ENCODE measurements at regions of chr13 and their contacts with region 1.

Region 1: GRCh38 chr13:99269627-99270241 is 11.6 kb upstream of the GPR18 start:
- DNase-seq: peak; percentile 81
- ATAC-seq: peak; percentile 76
- H3K4me3 ChIP-seq: no peak overlapping the region
- H3K4me3 Mint-ChIP-seq: no peak overlapping the region
- H3K27ac ChIP-seq: peak overlapping the region; percentile 69 to 89
- H3K27ac Mint-ChIP-seq: peak overlapping the region; percentile 50
- H3K4me1 ChIP-seq: peaks cover 45 to 55% of the 10 kb centered on the region in 2 donors
- H3K4me1 Mint-ChIP-seq: peaks cover 59% of the 10 kb centered on the region
- H3K27me3 ChIP-seq: no peaks in the 10 kb centered on the region
- H3K27me3 Mint-ChIP-seq: no peaks in the 10 kb centered on the region
- CTCF ChIP-seq: peak; percentile 92

Region 2: GRCh38 chr13:99200432-99201167 is 69.1 kb before region 1 on chr13 and contains the start of gene UBAC2:
- CTCF ChIA-PET with region 1: interaction called, 349 read pairs
- POLR2A ChIA-PET with region 1: interaction called, 11 read pairs
- intact Hi-C with region 1: loop called (anchors 1 kb)
- DNase-seq: peak; percentile 98
- ATAC-seq: peak; percentile 73
- H3K4me3 ChIP-seq: peak within 1 kb of the TSS; percentile 71 to 97 (median 92)
- H3K4me3 Mint-ChIP-seq: peak within 1 kb of the TSS; percentile 97
- H3K27ac ChIP-seq: peak within 1 kb of the TSS; percentile 97
- H3K27ac Mint-ChIP-seq: peak within 1 kb of the TSS; percentile 94
- H3K4me1 ChIP-seq: peaks cover 38 to 46% of the 10 kb centered on the region in 2 donors
- H3K4me1 Mint-ChIP-seq: peaks cover 54% of the 10 kb centered on the region
- H3K27me3 ChIP-seq: no peaks in the 10 kb centered on the region
- H3K27me3 Mint-ChIP-seq: no peaks in the 10 kb centered on the region
- CTCF ChIP-seq: no peak
- total RNA-seq, gene UBAC2: 52.9 and 56.3 TPM in 2 replicates

Region 3: DNA sequence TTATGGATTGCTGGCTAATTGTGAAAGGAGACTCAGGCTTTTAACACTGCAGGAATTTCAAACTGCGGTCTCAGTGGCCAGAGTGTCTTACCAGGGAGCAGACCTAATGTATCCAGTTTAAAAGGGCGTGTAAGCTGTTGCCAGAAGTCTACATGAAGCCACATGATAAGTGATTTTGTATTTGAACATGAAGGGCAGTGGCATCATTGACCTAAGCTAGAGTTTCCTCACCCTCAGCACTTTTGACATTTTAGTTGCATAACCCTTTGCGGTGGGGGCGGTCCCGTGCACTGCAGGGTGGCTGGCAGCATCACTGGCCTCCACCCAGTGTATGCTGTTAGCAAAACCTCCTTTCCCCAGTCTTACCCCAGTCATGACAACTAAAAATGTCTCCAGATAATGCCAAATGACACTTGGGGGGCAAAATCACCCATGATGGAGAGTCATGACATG is 12.1 kb after region 1 on chr13:
- CTCF ChIA-PET with region 1: interaction called, 164 read pairs
- POLR2A ChIA-PET with region 1: interaction called, 3 read pairs
- intact Hi-C with region 1: loop called (anchors 1 kb)
- DNase-seq: no peak
- ATAC-seq: peak; percentile 82
- H3K4me3 ChIP-seq: peak overlapping the region in 3 of 5 experiments; percentile 15 to 32 (median 31)
- H3K4me3 Mint-ChIP-seq: peak overlapping the region; percentile 73
- H3K27ac ChIP-seq: peak overlapping the region; percentile 85 to 89
- H3K27ac Mint-ChIP-seq: peak overlapping the region; percentile 95
- H3K4me1 ChIP-seq: peaks cover 87 to 88% of the 10 kb centered on the region in 2 donors
- H3K4me1 Mint-ChIP-seq: peaks cover 87% of the 10 kb centered on the region
- H3K27me3 ChIP-seq: no peaks in the 10 kb centered on the region
- H3K27me3 Mint-ChIP-seq: no peaks in the 10 kb centered on the region
- CTCF ChIP-seq: no peak

Region 4: GRCh38 chr13:99331881-99332293 is 62.2 kb after region 1 on chr13:
- CTCF ChIA-PET with region 1: interaction called, 23 read pairs
- POLR2A ChIA-PET with region 1: no interaction called
- intact Hi-C with region 1: no loop called
- DNase-seq: no peak
- ATAC-seq: no peak
- H3K4me3 ChIP-seq: no peak overlapping the region
- H3K4me3 Mint-ChIP-seq: no peak overlapping the region
- H3K27ac ChIP-seq: no peak overlapping the region
- H3K27ac Mint-ChIP-seq: no peak overlapping the region
- H3K4me1 ChIP-seq: peaks cover 13 to 24% of the 10 kb centered on the region in 2 donors
- H3K4me1 Mint-ChIP-seq: peaks cover 44% of the 10 kb centered on the region
- H3K27me3 ChIP-seq: no peaks in the 10 kb centered on the region
- H3K27me3 Mint-ChIP-seq: no peaks in the 10 kb centered on the region
- CTCF ChIP-seq: no peak

Region 5: DNA sequence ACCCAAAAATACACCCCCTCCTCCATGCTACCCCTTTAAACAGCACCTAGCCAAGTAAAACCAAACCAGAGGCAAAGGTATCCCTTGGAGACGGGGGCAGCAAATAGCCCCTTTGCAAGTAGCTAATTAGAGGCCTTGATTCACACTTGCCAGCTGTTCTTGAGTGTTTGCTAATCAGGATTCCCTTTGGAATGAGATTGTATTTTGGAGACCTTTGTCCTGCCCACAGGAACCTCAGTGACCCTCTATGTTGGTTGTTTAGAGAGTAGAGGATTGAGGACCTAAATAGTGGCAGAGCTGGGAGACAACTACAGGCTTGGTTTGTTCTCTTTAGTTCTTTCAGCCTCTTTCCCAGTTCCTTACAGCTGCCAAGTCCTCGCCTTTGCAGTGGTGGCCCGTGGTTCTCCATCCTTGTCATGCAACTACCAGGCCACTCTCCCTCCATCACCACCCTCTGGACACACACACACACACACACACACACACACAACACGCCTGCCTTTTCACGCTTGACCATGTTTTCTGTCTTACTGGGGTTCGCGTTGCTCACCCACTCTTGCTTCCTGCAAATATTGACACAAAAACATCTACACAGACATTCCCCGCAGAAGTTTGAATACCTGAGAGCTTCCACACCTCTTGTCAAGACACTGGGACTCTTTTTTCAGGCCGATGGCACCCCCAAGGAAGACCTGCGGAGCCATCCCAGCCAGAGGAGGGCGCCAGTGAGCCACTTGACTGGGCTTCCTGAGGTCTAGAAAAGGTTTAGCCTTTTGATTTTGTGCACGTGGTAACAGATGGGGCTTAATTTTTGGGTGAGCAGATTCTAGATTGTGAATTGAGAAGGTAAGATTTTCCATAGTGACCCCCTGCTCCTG is 117.4 kb after region 1 on chr13:
- CTCF ChIA-PET with region 1: interaction called, 477 read pairs
- POLR2A ChIA-PET with region 1: interaction called, 5 read pairs
- intact Hi-C with region 1: loop called (anchors 1 kb)
- DNase-seq: peak; percentile 89
- ATAC-seq: peak; percentile 68
- H3K4me3 ChIP-seq: no peak overlapping the region
- H3K4me3 Mint-ChIP-seq: peak overlapping the region; percentile 58
- H3K27ac ChIP-seq: peak overlapping the region; percentile 8 to 69
- H3K27ac Mint-ChIP-seq: peak overlapping the region; percentile 91
- H3K4me1 ChIP-seq: peaks cover 35 to 44% of the 10 kb centered on the region in 2 donors
- H3K4me1 Mint-ChIP-seq: peaks cover 46% of the 10 kb centered on the region
- H3K27me3 ChIP-seq: no peaks in the 10 kb centered on the region
- H3K27me3 Mint-ChIP-seq: no peaks in the 10 kb centered on the region
- CTCF ChIP-seq: peak; percentile 88

Region 6: DNA sequence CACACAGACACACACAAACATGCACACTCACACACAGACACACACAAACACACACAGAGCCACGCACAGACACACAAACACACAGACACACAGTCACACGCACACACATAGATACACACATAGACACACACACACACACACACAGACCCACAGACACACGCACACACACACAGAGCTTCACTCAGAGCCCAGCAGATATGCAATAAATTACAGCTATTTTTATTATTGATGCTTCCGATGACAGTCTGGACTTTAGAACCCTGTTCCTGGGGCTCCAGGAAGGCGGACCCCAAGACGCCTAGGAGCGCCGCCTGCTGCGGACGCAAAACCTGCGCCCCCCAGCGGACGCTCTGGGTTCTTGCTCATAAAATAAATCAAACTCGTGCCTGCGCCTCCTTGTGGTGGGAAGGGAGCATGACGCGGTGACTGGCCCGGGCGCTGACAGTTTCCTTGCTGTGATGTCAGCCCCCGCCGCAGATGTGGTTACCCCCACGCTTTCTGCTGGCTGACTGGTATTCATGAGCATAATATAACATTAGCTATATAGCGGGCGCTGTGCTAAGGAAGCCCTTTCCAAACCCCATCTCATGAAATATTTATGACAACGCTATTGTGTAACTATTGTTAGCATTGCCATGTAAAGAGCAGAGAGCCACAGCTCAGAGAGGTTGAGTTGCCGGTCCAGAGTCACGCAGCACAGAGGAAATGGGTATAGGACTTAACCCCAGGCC is 167.1 kb after region 1 on chr13:
- CTCF ChIA-PET with region 1: interaction called, 545 read pairs
- POLR2A ChIA-PET with region 1: interaction called, 14 read pairs
- intact Hi-C with region 1: loop called (anchors 1 kb)
- DNase-seq: peak; percentile 96
- ATAC-seq: peak; percentile 69
- H3K4me3 ChIP-seq: peak overlapping the region in 2 of 5 experiments; percentile 6 to 27
- H3K4me3 Mint-ChIP-seq: peak overlapping the region; percentile 76
- H3K27ac ChIP-seq: no peak overlapping the region
- H3K27ac Mint-ChIP-seq: peak overlapping the region; percentile 81
- H3K4me1 ChIP-seq: peaks cover 49 to 70% of the 10 kb centered on the region in 2 donors
- H3K4me1 Mint-ChIP-seq: peaks cover 64% of the 10 kb centered on the region
- H3K27me3 ChIP-seq: no peaks in the 10 kb centered on the region
- H3K27me3 Mint-ChIP-seq: no peaks in the 10 kb centered on the region
- CTCF ChIP-seq: peak; percentile 100

Region 7: GRCh38 chr13:100382785-100383184 is 1113.1 kb after region 1 on chr13:
- CTCF ChIA-PET with region 1: no interaction called
- POLR2A ChIA-PET with region 1: no interaction called
- intact Hi-C with region 1: no loop called
- DNase-seq: no peak
- ATAC-seq: no peak
- H3K4me3 ChIP-seq: no peak overlapping the region
- H3K4me3 Mint-ChIP-seq: no peak overlapping the region
- H3K27ac ChIP-seq: no peak overlapping the region
- H3K27ac Mint-ChIP-seq: no peak overlapping the region
- H3K4me1 ChIP-seq: no peaks in the 10 kb centered on the region
- H3K4me1 Mint-ChIP-seq: no peaks in the 10 kb centered on the region
- H3K27me3 ChIP-seq: no peaks in the 10 kb centered on the region
- H3K27me3 Mint-ChIP-seq: no peaks in the 10 kb centered on the region
- CTCF ChIP-seq: no peak